ENCODE measurements at regions of chr19 and their contacts with region 1.

Region 1: DNA sequence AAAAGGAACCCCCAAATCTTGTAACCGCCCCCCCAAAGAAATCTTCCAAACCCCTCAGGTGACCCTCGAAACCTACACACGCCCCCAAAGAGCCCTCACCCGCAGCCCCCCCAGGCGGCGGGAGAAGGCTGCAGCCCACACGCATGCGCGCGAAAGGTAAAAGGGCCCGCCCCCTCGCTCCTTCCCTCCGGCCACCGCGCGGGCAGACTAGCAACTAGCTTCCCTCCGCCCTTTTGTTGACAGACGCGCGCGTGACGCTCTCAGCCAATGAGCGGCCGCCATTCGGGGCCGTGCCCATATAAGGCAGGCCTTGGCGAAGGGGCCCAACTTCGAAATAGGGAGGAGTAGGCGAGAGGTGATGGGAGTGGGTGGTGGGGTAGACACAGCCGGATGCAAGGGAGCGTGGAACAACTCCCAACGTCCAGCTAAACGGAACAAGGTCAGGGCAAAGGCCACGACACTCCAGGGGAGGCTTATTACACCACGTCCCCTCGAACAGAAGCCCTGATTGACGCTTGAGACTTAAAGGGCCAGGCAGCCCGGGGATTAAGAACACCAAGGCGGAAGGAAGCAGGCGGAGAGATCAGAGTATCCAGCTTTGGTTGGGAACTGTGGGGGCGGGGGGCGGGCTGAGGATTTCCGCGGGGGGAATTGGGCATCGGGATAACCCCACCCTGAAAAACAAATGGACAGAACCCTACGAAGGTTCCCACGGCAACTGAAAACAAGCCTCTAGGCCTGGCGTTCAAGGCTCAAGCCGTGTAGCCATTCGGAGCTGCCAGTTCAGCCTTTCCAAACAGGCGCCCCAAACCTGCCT is 13.3 kb downstream of the FBXO46 start:
- DNase-seq: peak; percentile 99
- ATAC-seq: peak; percentile 98
- H3K4me3 Mint-ChIP-seq: peak overlapping the region; percentile 91
- H3K27ac Mint-ChIP-seq: peak overlapping the region; percentile 85
- H3K4me1 Mint-ChIP-seq: peaks cover 37% of the 10 kb centered on the region
- H3K27me3 Mint-ChIP-seq: no peaks in the 10 kb centered on the region

Region 2: DNA sequence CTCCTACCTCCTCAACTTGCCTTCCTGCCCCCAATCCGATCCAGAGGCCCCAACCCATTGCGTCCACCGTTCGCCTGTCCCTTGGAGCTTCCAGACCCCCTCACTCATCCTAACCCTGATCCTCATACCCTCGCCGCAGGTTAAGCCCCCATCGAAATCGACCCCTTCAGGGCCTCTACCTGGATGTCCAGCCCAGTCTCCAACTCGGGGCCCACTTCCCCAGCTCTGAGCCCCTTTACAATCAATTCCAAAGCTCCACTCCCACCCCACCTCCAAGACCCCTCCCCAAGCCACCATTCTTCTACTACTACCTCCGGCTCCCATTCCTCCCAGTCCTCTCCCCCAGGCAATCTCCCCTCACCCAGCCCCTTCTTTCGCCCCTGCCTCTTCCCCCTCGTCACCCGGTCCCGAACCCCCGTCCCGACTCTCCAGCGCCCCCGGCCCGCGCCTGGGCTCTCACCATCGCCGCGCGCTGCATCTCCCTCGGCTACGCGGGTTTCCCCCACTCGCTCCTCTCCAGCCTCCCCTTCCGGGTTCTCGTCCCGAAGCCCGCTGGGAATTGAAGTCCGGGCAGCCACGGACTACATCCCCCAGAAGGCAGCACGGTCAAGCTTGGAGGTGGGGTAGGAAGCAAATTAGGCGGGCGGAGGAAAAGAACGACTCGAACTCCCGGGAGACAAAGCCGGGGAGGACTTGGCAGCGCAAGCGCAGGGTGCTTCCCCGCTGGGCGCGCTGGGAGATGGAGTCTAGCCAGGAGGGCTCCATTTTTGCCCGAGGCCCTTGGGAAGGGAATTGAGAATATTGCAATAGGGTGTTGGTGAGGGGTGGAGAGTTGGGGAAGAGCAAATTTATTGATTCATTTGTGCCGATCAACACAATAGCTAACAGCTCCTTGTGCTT is 13.3 kb after region 1 on chr19 and contains the start of gene FBXO46:
- CTCF ChIA-PET with region 1: interaction called, 18 read pairs
- DNase-seq: peak; percentile 98
- ATAC-seq: peak; percentile 100
- H3K4me3 Mint-ChIP-seq: peak within 1 kb of the TSS; percentile 96
- H3K27ac Mint-ChIP-seq: peak within 1 kb of the TSS; percentile 91
- H3K4me1 Mint-ChIP-seq: peaks cover 28% of the 10 kb centered on the region
- H3K27me3 Mint-ChIP-seq: no peaks in the 10 kb centered on the region
- total RNA-seq, gene FBXO46: 33.0 to 37.1 TPM